ENCODE measurements at regions of chr13 and their contacts with region 1.

Region 1: DNA sequence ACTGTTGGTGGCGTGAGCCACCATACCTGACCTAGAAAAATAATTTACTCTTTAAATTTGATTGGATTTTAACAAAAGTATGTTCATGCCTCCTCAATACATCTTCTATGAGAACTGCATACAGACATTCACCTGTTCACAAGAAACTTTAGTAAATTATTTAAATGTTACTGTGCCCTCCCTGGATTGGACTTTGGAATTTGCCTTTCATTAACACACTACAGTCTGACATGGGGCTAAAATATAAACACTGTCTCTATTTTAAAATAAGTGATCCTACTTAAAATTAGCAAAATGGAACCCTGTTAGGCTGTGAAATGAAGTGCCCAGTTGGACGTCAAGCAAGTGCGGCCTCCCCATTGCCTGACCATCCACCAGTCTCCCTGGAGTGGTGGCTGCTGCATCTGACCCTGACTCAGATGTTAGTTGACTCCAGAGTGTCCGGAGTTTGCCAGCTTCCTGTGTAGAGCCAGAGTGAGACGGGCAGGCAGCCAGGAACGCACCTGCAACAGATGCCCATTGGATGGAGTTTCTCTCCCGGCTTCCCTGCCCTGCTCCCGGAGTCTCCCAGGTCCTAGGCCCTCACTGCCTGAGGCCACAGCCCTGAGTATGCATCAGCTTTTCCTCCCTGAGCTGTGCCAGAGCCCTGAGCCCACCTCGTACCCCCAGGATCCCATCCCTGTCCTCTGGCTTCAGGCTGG is 45.9 kb upstream of the ATP11A start:
- DNase-seq: no peak
- ATAC-seq: no peak
- H3K4me3 Mint-ChIP-seq: no peak overlapping the region
- H3K27ac Mint-ChIP-seq: no peak overlapping the region
- H3K4me1 Mint-ChIP-seq: peaks cover 5% of the 10 kb centered on the region
- H3K27me3 Mint-ChIP-seq: peaks cover 16% of the 10 kb centered on the region
- CTCF ChIP-seq: no peak

Region 2: GRCh38 chr13:112689303-112690165 is 45.6 kb after region 1 on chr13 and contains the start of gene ATP11A:
- CTCF ChIA-PET with region 1: interaction called, 5 read pairs
- POLR2A ChIA-PET with region 1: no interaction called
- intact Hi-C with region 1: loop called (anchors 5 kb)
- DNase-seq: peak; percentile 79
- ATAC-seq: peak; percentile 82
- H3K4me3 Mint-ChIP-seq: peak within 1 kb of the TSS; percentile 82
- H3K27ac Mint-ChIP-seq: peak within 1 kb of the TSS; percentile 87
- H3K4me1 Mint-ChIP-seq: peaks cover 42% of the 10 kb centered on the region
- H3K27me3 Mint-ChIP-seq: no peaks in the 10 kb centered on the region
- CTCF ChIP-seq: no peak
- total RNA-seq, gene ATP11A: 28.8 to 30.2 TPM